ENCODE measurements at regions of chr3 and their contacts with region 1.

Region 1: GRCh38 chr3:51391075-51391567 is at the start of gene RBM15B:
- DNase-seq: peak; percentile 97
- ATAC-seq: peak; percentile 95
- H3K4me3 ChIP-seq: peak within 1 kb of the TSS; percentile 11 to 66 (median 58)
- H3K4me3 Mint-ChIP-seq: peak within 1 kb of the TSS; percentile 84
- H3K27ac ChIP-seq: peak within 1 kb of the TSS; percentile 71 to 78
- H3K27ac Mint-ChIP-seq: peak within 1 kb of the TSS; percentile 88
- H3K4me1 ChIP-seq: peaks cover 24 to 41% of the 10 kb centered on the region in 2 donors
- H3K4me1 Mint-ChIP-seq: peaks cover 54% of the 10 kb centered on the region
- H3K27me3 ChIP-seq: no peaks in the 10 kb centered on the region
- H3K27me3 Mint-ChIP-seq: no peaks in the 10 kb centered on the region
- CTCF ChIP-seq: peak; percentile 87
- total RNA-seq, gene RBM15B: 29.5 and 30.5 TPM in 2 replicates

Region 2: DNA sequence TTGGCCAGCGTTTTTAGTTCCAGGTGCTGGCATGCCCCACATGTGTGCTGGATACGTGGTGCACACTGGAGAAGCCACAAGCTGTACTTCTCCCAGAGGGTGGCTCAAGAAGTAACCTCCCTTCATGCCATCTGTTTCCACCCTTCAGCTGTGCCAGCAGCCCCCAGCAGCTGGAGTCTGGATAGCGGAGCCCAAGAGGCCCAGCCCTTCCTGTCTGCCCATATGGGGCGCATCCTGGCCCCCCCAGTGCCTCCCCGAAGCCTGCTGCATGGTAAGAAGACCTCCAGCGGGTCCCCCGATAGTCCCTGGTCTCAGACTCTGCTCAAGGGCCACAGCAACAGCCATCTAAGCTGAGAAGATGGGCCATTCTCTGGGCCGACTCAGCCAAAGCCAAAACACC is 11.8 kb before region 1 on chr3:
- CTCF ChIA-PET with region 1: interaction called, 12 read pairs
- POLR2A ChIA-PET with region 1: no interaction called
- intact Hi-C with region 1: no loop called
- DNase-seq: no peak
- ATAC-seq: no peak
- H3K4me3 ChIP-seq: no peak overlapping the region
- H3K4me3 Mint-ChIP-seq: no peak overlapping the region
- H3K27ac ChIP-seq: no peak overlapping the region
- H3K27ac Mint-ChIP-seq: no peak overlapping the region
- H3K4me1 ChIP-seq: peaks cover 9% of the 10 kb centered on the region in 2 donors
- H3K4me1 Mint-ChIP-seq: peaks cover 5% of the 10 kb centered on the region
- H3K27me3 ChIP-seq: peaks cover 0 to 24% (median 4%) of the 10 kb centered on the region in 4 experiments
- H3K27me3 Mint-ChIP-seq: peaks cover 26% of the 10 kb centered on the region
- CTCF ChIP-seq: no peak

Region 3: GRCh38 chr3:51434746-51435327 is 43.7 kb after region 1 on chr3:
- CTCF ChIA-PET with region 1: interaction called, 18 read pairs
- POLR2A ChIA-PET with region 1: no interaction called
- intact Hi-C with region 1: loop called (anchors 1 kb)
- DNase-seq: peak; percentile 54
- ATAC-seq: peak; percentile 56
- H3K4me3 ChIP-seq: no peak overlapping the region
- H3K4me3 Mint-ChIP-seq: no peak overlapping the region
- H3K27ac ChIP-seq: no peak overlapping the region
- H3K27ac Mint-ChIP-seq: no peak overlapping the region
- H3K4me1 ChIP-seq: no peaks in the 10 kb centered on the region
- H3K4me1 Mint-ChIP-seq: no peaks in the 10 kb centered on the region
- H3K27me3 ChIP-seq: no peaks in the 10 kb centered on the region
- H3K27me3 Mint-ChIP-seq: no peaks in the 10 kb centered on the region
- CTCF ChIP-seq: peak; percentile 72